ENCODE measurements at regions of chr19 and their contacts with region 1.

Region 1: DNA sequence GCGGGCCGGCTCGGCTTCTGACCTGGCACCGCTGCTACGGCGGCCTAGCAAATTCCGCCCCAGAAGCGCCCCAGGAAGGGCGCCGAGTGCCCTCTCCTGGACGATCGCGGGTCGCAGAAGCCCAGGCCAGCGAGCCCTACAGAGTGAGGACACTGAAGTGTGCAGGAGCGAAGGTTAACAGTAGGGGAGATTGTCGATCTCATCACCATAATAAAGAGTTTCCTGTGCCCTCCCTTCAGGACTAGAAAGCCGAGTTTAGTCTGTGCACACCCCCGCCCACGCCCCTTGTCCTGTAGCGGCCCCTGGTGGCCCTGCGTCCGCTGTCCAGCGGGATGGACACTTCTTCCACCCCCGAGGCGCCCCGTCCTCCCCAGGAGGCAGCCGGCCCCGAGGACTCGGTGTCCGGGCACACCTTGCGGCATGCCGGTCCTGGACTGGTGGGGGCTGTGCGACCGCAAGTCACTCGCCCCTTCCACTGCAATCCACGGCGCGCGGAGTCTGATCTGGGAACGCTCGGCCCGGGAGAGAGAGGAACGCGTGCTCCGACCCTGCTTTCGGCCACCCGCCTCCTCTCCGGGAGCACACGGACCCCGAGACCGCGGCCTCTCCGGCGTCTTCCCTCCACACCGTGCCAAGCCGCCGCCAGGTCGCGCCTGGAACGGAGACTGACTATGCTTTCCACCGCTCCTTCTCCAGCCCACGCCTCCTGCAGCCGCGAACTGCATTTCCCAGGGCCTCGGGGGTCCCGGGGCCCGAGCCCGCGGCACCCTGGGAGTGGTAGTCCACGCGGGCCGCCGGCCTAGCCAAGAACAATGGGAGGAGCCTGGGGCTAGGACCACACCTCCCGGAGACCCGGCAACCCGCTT is 769 bp upstream of the KMT2B start:
- DNase-seq: peak; percentile 64 to 99 (median 98)
- ATAC-seq: peak; percentile 92
- H3K4me3 ChIP-seq: peak overlapping the region; percentile 84
- H3K4me3 Mint-ChIP-seq: peak overlapping the region; percentile 88 to 99 (median 96)
- H3K27ac ChIP-seq: peak overlapping the region; percentile 80
- H3K27ac Mint-ChIP-seq: peak overlapping the region; percentile 22 to 98 (median 92)
- H3K4me1 ChIP-seq: peaks cover 37 to 54% of the 10 kb centered on the region in 2 donors
- H3K4me1 Mint-ChIP-seq: peaks cover 40 to 63% (median 57%) of the 10 kb centered on the region in 7 donors
- H3K27me3 ChIP-seq: no peaks in the 10 kb centered on the region
- H3K27me3 Mint-ChIP-seq: no peaks in the 10 kb centered on the region

Region 2: GRCh38 chr19:35509861-35510625 is 207.0 kb before region 1 on chr19:
- CTCF ChIA-PET with region 1: no interaction called
- POLR2A ChIA-PET with region 1: no interaction called
- intact Hi-C with region 1: loop called in 1 of 2 experiments (anchors 1 kb)
- DNase-seq: peak; percentile 34 to 80 (median 58)
- ATAC-seq: peak; percentile 83
- H3K4me3 ChIP-seq: peak overlapping the region; percentile 53
- H3K4me3 Mint-ChIP-seq: peak overlapping the region; percentile 28 to 84 (median 76)
- H3K27ac ChIP-seq: no peak overlapping the region
- H3K27ac Mint-ChIP-seq: peak overlapping the region in 3 of 9 donors; percentile 20 to 61 (median 46)
- H3K4me1 ChIP-seq: peaks cover 12 to 17% of the 10 kb centered on the region in 2 donors
- H3K4me1 Mint-ChIP-seq: peaks cover 9 to 21% (median 14%) of the 10 kb centered on the region in 7 donors
- H3K27me3 ChIP-seq: peaks cover 0 to 4% of the 10 kb centered on the region in 2 donors
- H3K27me3 Mint-ChIP-seq: peaks cover 0 to 70% (median 14%) of the 10 kb centered on the region in 5 donors

Region 3: DNA sequence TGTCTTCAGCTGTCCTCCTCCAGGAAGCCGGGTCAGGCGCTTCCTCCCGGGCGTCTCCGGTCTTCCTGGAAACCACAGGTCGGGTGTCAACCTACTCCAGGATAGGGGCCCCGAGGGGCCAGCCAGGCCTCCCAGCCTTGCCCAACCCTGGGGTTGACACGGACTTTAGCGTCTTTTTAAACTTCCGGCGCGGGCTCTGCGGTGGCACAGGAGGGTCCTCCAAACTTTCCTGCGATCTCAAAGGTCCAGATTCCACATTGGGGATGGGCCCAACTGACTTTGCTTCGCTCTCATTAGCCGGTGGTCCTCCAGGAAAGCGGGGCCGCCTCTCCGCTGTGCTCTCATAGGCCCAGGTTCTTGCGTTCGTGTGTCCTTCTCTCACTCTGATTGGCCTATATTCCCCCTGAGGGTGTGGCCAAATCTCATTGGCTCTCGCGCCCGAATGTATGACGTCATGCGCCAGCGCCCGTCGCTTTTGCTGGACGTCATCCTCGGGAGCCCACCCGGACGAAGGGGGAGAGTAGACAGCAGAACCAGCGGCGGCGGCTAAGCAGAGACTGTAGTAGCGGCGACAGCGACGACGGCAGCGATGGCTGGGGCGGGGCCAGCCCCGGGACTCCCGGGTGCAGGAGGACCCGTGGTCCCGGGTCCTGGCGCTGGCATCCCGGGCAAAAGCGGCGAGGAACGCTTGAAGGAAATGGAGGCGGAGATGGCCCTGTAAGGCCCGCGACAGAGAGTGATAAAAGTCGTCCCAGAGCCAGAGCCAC is 88.3 kb before region 1 on chr19 and contains the start of gene RBM42:
- CTCF ChIA-PET with region 1: no interaction called
- POLR2A ChIA-PET with region 1: no interaction called
- intact Hi-C with region 1: loop called (anchors 1 to 5 kb)
- DNase-seq: peak; percentile 87 to 98 (median 97)
- ATAC-seq: peak; percentile 100
- H3K4me3 ChIP-seq: peak within 1 kb of the TSS; percentile 89
- H3K4me3 Mint-ChIP-seq: peak within 1 kb of the TSS; percentile 91 to 100 (median 98)
- H3K27ac ChIP-seq: peak within 1 kb of the TSS; percentile 89
- H3K27ac Mint-ChIP-seq: peak within 1 kb of the TSS; percentile 92 to 100 (median 99)
- H3K4me1 ChIP-seq: peaks cover 6 to 15% of the 10 kb centered on the region in 2 donors
- H3K4me1 Mint-ChIP-seq: peaks cover 12 to 35% (median 25%) of the 10 kb centered on the region in 7 donors
- H3K27me3 ChIP-seq: no peaks in the 10 kb centered on the region
- H3K27me3 Mint-ChIP-seq: no peaks in the 10 kb centered on the region
- total RNA-seq, gene RBM42: 39.0 to 98.2 (median 51.3) TPM

Region 4: GRCh38 chr19:35702223-35703012 is 14.6 kb before region 1 on chr19:
- CTCF ChIA-PET with region 1: interaction called, 11 read pairs
- POLR2A ChIA-PET with region 1: interaction called, 20 read pairs
- intact Hi-C with region 1: loop called (anchors 1 kb)
- DNase-seq: peak; percentile 66 to 96 (median 90)
- ATAC-seq: peak; percentile 100
- H3K4me3 ChIP-seq: peak overlapping the region; percentile 85
- H3K4me3 Mint-ChIP-seq: peak overlapping the region; percentile 88 to 100 (median 96)
- H3K27ac ChIP-seq: peak overlapping the region; percentile 66
- H3K27ac Mint-ChIP-seq: peak overlapping the region; percentile 79 to 98 (median 93)
- H3K4me1 ChIP-seq: no peaks in the 10 kb centered on the region
- H3K4me1 Mint-ChIP-seq: peaks cover 5 to 22% (median 6%) of the 10 kb centered on the region in 7 donors
- H3K27me3 ChIP-seq: no peaks in the 10 kb centered on the region
- H3K27me3 Mint-ChIP-seq: peaks cover 0 to 4% (median 0%) of the 10 kb centered on the region in 5 donors

Region 5: DNA sequence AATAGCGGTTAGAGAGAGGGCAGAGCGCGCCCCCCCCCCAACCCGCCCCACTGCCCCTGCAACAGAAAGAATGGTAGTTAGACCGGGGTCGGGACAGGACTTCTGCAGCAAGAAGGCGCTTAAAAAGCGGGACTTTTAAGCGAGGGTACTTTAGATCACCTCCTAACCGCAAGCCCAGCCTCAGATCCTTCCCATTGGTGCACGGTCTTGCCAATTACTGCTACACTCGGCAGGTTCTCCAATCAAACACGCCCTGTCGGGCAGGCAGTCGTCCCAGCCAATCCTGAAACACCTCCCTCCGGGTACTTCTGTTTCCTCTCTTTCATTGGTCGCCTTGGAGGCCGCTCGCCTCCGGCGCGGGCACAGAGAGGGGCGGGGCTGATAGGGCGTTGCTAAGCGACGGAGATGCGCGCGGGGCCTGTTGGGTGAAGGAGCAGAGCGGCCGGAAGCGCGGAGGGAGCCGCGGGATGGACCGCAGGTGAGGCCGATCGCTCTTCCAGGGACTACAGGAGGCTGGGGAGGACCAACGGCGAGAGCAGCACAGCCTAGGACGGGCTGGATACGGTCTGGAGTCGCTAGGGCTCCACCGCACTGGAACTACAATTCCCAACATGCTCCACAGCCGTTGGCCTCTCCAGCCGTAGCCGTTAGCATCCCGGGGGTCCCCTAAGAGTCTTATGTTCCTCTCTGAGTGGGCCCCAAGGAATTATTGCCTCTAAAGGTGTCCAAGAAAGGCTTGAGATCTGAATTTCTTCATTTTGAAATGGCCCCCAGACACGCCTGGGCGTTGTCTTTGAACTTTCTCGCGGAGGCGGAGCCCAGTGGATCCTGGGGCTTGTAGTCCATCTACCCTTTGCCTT is 40.9 kb after region 1 on chr19 and contains the start of gene PROSER3:
- CTCF ChIA-PET with region 1: no interaction called
- POLR2A ChIA-PET with region 1: no interaction called
- intact Hi-C with region 1: loop called (anchors 1 kb)
- DNase-seq: peak; percentile 93 to 100 (median 99)
- ATAC-seq: peak; percentile 98
- H3K4me3 ChIP-seq: peak within 1 kb of the TSS; percentile 99
- H3K4me3 Mint-ChIP-seq: peak within 1 kb of the TSS; percentile 92 to 100 (median 96)
- H3K27ac ChIP-seq: peak within 1 kb of the TSS; percentile 92
- H3K27ac Mint-ChIP-seq: peak within 1 kb of the TSS; percentile 89 to 99 (median 95)
- H3K4me1 ChIP-seq: peaks cover 10 to 35% of the 10 kb centered on the region in 2 donors
- H3K4me1 Mint-ChIP-seq: peaks cover 13 to 42% (median 37%) of the 10 kb centered on the region in 7 donors
- H3K27me3 ChIP-seq: peaks cover 0 to 4% of the 10 kb centered on the region in 2 donors
- H3K27me3 Mint-ChIP-seq: peaks cover 0 to 12% (median 5%) of the 10 kb centered on the region in 5 donors
- total RNA-seq, gene PROSER3: 34.0 to 47.3 (median 39.7) TPM

Region 6: DNA sequence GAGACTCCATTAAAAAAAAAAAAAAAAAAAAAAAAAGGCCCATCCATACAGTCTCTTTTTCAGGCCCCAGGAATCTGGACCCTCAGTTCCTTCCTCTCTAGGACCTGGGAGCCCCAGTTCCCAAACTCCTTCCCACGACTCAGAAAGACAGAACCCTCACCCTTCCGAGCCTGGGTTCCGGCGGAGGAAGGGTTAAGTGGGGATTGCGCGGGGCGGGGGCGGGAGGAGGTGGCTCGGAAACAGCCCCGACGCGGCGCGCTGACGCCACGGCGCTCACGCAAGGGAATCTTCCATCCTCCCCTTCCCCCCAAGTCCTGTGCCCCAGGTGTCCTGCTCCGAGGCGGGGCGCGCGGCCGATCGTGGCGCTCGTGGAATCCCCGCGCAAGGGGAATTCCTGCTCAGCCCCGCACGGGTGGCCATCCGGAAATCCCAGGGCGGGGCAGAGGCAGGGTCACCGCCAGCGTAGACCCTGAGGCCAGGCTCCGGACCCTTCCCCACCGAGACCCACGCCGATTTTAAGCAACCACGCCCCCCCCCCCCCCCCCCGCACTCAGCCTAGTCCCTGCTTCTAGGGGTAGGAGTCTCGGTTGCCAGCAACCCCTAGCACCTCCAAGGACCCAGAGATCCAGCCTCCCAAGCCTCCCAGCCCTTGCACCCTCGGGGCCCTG is 182.6 kb after region 1 on chr19:
- CTCF ChIA-PET with region 1: no interaction called
- POLR2A ChIA-PET with region 1: no interaction called
- intact Hi-C with region 1: loop called (anchors 1 kb)
- DNase-seq: peak; percentile 74 to 94 (median 87)
- ATAC-seq: peak; percentile 74
- H3K4me3 ChIP-seq: peak overlapping the region; percentile 94
- H3K4me3 Mint-ChIP-seq: peak overlapping the region; percentile 83 to 100 (median 95)
- H3K27ac ChIP-seq: peak overlapping the region; percentile 100
- H3K27ac Mint-ChIP-seq: peak overlapping the region; percentile 92 to 97 (median 96)
- H3K4me1 ChIP-seq: peaks cover 35 to 43% of the 10 kb centered on the region in 2 donors
- H3K4me1 Mint-ChIP-seq: peaks cover 34 to 65% (median 46%) of the 10 kb centered on the region in 7 donors
- H3K27me3 ChIP-seq: no peaks in the 10 kb centered on the region
- H3K27me3 Mint-ChIP-seq: no peaks in the 10 kb centered on the region

Region 7: GRCh38 chr19:36114763-36115452 is 397.9 kb after region 1 on chr19 and contains the start of gene POLR2I:
- CTCF ChIA-PET with region 1: no interaction called
- POLR2A ChIA-PET with region 1: interaction called, 4 read pairs
- intact Hi-C with region 1: loop called in 1 of 2 experiments (anchors 1 kb)
- DNase-seq: peak; percentile 95 to 100 (median 99)
- ATAC-seq: peak; percentile 92
- H3K4me3 ChIP-seq: peak within 1 kb of the TSS; percentile 97
- H3K4me3 Mint-ChIP-seq: peak within 1 kb of the TSS; percentile 89 to 98 (median 96)
- H3K27ac ChIP-seq: peak within 1 kb of the TSS; percentile 90
- H3K27ac Mint-ChIP-seq: peak within 1 kb of the TSS; percentile 97 to 99 (median 98)
- H3K4me1 ChIP-seq: peaks cover 14 to 15% of the 10 kb centered on the region in 2 donors
- H3K4me1 Mint-ChIP-seq: peaks cover 27 to 54% (median 42%) of the 10 kb centered on the region in 7 donors
- H3K27me3 ChIP-seq: no peaks in the 10 kb centered on the region
- H3K27me3 Mint-ChIP-seq: peaks cover 0 to 5% (median 0%) of the 10 kb centered on the region in 5 donors
- total RNA-seq, gene POLR2I: 20.9 to 56.7 (median 44.7) TPM

Measured in naive thymus-derived CD4-positive, alpha-beta T cell (primary cell).